HCT116 (cell line): ENCODE measurements at regions of chr10 and their contacts with region 1.

Region 1: GRCh38 chr10:122435212-122435827 is 19.1 kb upstream of the ARMS2 start:
- DNase-seq: peak; percentile 45
- ATAC-seq: peak; percentile 76
- H3K4me3 ChIP-seq: no peak overlapping the region
- H3K27ac ChIP-seq: no peak overlapping the region
- H3K4me1 ChIP-seq: no peaks in the 10 kb centered on the region
- H3K27me3 ChIP-seq: no peaks in the 10 kb centered on the region
- CTCF ChIP-seq: peak; percentile 44 to 96 (median 86)
- POLR2A ChIP-seq: no peak
- RAD21 ChIP-seq: peak; percentile 95

Region 2: GRCh38 chr10:121702351-121703320 is 732.7 kb before region 1 on chr10:
- CTCF ChIA-PET with region 1: no interaction called
- POLR2A ChIA-PET with region 1: no interaction called
- RAD21 ChIA-PET with region 1: no interaction called
- intact Hi-C with region 1: no loop called
- DNase-seq: no peak
- ATAC-seq: no peak
- H3K4me3 ChIP-seq: no peak overlapping the region
- H3K27ac ChIP-seq: no peak overlapping the region
- H3K4me1 ChIP-seq: peaks cover 0 to 5% of the 10 kb centered on the region in 2 experiments; a peak in 1 of 4 replicates
- H3K27me3 ChIP-seq: no peaks in the 10 kb centered on the region; the same call in 1 of the 2 replicates
- CTCF ChIP-seq: no peak
- POLR2A ChIP-seq: no peak
- RAD21 ChIP-seq: no peak

Region 3: GRCh38 chr10:122142641-122143237 is 292.6 kb before region 1 on chr10:
- CTCF ChIA-PET with region 1: no interaction called
- POLR2A ChIA-PET with region 1: no interaction called
- RAD21 ChIA-PET with region 1: no interaction called
- intact Hi-C with region 1: loop called (anchors 5 kb)
- DNase-seq: no peak
- ATAC-seq: peak; percentile 52
- H3K4me3 ChIP-seq: no peak overlapping the region
- H3K27ac ChIP-seq: no peak overlapping the region; the same call in 1 of the 2 replicates
- H3K4me1 ChIP-seq: peaks cover 31 to 45% of the 10 kb centered on the region in 2 experiments
- H3K27me3 ChIP-seq: no peaks in the 10 kb centered on the region
- CTCF ChIP-seq: peak; percentile 70 to 100 (median 99)
- POLR2A ChIP-seq: no peak
- RAD21 ChIP-seq: peak; percentile 92

Region 4: DNA sequence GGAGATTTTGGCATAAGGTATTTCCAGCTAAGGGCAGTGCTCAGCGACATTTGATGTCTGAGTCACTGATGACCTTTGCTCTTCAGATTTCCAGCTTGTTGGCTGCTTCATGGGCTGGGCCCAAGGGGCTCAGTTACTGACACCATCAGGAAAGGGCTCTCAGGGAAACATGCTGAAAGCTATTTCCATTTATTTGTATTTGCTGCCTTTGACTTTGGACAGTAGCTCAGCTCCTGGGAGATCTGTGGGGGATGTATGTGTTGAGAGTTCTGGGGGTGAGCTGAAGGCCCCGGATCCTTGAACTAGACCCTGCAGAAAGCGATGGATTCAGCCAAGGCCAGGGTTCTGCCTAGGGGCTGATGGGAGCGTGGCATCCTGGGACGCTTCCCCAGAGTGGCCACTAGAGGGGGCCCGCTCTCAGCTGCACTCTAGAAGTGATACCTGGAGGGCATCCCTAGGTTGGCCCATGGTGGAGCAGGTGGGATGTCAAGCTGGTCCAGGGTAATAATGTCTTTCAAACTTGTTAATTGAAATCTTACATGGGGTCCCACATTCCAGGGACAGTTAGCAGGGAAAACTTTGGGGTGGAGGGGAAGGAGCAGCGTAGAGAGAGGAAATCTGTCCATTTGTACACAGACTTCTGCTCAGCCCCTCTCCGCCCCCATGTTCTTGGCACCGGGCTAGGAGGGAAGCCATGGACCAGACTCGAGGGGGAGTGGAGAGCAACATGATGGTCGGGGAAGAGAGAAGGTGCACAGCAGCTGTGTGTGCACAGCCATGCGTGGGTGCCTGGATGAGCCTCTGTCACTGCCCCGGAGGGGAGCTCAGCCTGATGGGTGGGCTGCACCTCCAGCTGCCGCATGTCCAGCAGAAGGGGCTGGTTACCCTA is 167.2 kb before region 1 on chr10:
- CTCF ChIA-PET with region 1: interaction called, 11 read pairs
- POLR2A ChIA-PET with region 1: no interaction called
- RAD21 ChIA-PET with region 1: no interaction called
- intact Hi-C with region 1: no loop called
- DNase-seq: peak; percentile 36
- ATAC-seq: peak; percentile 99
- H3K4me3 ChIP-seq: no peak overlapping the region
- H3K27ac ChIP-seq: no peak overlapping the region
- H3K4me1 ChIP-seq: peaks cover 0 to 16% of the 10 kb centered on the region in 2 experiments; a peak in 2 of 4 replicates
- H3K27me3 ChIP-seq: no peaks in the 10 kb centered on the region
- CTCF ChIP-seq: peak; percentile 85 to 100 (median 100)
- POLR2A ChIP-seq: no peak
- RAD21 ChIP-seq: peak; percentile 80

Region 5: DNA sequence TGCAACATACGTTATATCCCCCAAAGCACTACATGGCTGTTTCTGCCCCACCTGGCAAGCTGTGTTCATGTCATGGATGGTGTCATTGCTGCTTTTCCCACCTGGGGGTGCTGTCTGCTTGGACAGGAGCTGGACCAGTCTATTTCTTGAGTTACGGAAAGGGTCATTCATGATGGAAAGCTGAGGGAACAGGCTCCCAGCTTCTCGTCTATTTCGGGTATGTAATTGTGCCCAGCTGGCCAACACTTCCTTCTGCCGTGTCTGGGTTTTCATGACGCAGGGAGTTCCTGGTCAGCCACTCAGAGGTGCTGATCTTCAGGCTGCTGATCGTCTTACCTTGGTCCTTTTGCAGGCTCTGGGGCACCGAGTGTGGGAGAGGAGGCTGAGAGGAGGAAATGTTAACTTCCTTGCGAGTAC is 155.6 kb before region 1 on chr10:
- CTCF ChIA-PET with region 1: interaction called, 52 read pairs
- POLR2A ChIA-PET with region 1: no interaction called
- RAD21 ChIA-PET with region 1: interaction called in 1 of 2 experiments, 4 read pairs
- intact Hi-C with region 1: loop called (anchors 1 kb)
- DNase-seq: peak; percentile 70
- ATAC-seq: peak; percentile 87
- H3K4me3 ChIP-seq: no peak overlapping the region
- H3K27ac ChIP-seq: no peak overlapping the region
- H3K4me1 ChIP-seq: peaks cover 3 to 15% of the 10 kb centered on the region in 2 experiments; a peak in 3 of 4 replicates
- H3K27me3 ChIP-seq: no peaks in the 10 kb centered on the region
- CTCF ChIP-seq: peak; percentile 88 to 98 (median 97); a peak in 5 of 6 replicates
- POLR2A ChIP-seq: no peak
- RAD21 ChIP-seq: peak; percentile 98

Region 6: DNA sequence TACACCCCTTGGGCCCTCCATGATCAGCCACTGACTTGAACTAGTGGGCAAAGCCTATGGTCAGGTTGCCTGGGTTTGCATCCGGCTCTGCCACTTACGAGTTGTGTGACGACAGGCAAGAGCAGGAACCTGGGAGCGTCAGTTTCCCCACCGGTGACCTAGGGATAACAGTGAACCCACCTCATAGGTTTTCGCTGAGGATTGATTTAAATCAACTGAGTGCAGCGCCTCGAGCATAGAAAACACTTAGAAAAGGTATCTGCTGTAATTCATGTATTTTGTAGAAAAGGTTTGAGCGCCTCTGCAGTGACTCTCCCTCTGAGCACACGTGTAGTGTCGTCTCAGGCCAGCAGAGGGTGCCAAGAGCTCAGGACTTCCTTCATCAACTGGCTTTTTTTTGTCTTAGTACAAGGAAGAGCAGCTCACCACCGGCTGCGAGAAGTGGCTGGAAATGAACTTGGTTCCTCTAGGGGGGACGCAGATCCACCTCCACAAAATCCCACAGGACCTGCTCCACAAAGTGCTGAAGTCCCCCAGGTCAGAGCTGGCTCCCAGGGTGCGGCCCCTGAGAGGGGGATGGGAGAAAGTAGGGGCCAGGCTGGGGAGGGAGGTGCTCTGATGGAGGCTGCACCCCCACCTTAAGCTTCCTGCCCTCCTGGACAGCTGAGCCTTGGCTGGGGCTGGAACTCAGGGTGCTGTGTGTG is 136.6 kb before region 1 on chr10:
- CTCF ChIA-PET with region 1: interaction called, 150 read pairs
- POLR2A ChIA-PET with region 1: interaction called, 4 read pairs
- RAD21 ChIA-PET with region 1: interaction called, 22 read pairs
- intact Hi-C with region 1: loop called (anchors 1 kb)
- DNase-seq: peak; percentile 73
- ATAC-seq: peak; percentile 95
- H3K4me3 ChIP-seq: peak overlapping the region; percentile 22 to 35
- H3K27ac ChIP-seq: no peak overlapping the region; the same call in 1 of the 2 replicates
- H3K4me1 ChIP-seq: peaks cover 0 to 18% of the 10 kb centered on the region in 2 experiments; a peak in 2 of 4 replicates
- H3K27me3 ChIP-seq: no peaks in the 10 kb centered on the region
- CTCF ChIP-seq: peak; percentile 94 to 99 (median 98)
- POLR2A ChIP-seq: no peak
- RAD21 ChIP-seq: peak; percentile 100

Region 7: GRCh38 chr10:122342293-122343134 is 92.8 kb before region 1 on chr10:
- CTCF ChIA-PET with region 1: interaction called, 14 read pairs
- POLR2A ChIA-PET with region 1: no interaction called
- RAD21 ChIA-PET with region 1: interaction called in 1 of 2 experiments, 4 read pairs
- intact Hi-C with region 1: loop called (anchors 1 kb)
- DNase-seq: peak; percentile 39
- ATAC-seq: peak; percentile 73
- H3K4me3 ChIP-seq: no peak overlapping the region
- H3K27ac ChIP-seq: no peak overlapping the region
- H3K4me1 ChIP-seq: peaks cover 7 to 17% of the 10 kb centered on the region in 2 experiments
- H3K27me3 ChIP-seq: no peaks in the 10 kb centered on the region
- CTCF ChIP-seq: peak; percentile 90 to 98 (median 90)
- POLR2A ChIP-seq: no peak
- RAD21 ChIP-seq: peak; percentile 89

Region 8: GRCh38 chr10:122446668-122447423 is 11.5 kb after region 1 on chr10:
- CTCF ChIA-PET with region 1: interaction called, 13 read pairs
- POLR2A ChIA-PET with region 1: interaction called, 3 read pairs
- RAD21 ChIA-PET with region 1: interaction called in 1 of 2 experiments, 3 read pairs
- intact Hi-C with region 1: no loop called
- DNase-seq: peak; percentile 36
- ATAC-seq: peak; percentile 99
- H3K4me3 ChIP-seq: no peak overlapping the region
- H3K27ac ChIP-seq: no peak overlapping the region
- H3K4me1 ChIP-seq: peaks cover 7 to 15% of the 10 kb centered on the region in 2 experiments; a peak in 3 of 4 replicates
- H3K27me3 ChIP-seq: no peaks in the 10 kb centered on the region
- CTCF ChIP-seq: no peak
- POLR2A ChIP-seq: no peak
- RAD21 ChIP-seq: no peak

Region 9: GRCh38 chr10:122637376-122637775 is 202.1 kb after region 1 on chr10:
- CTCF ChIA-PET with region 1: no interaction called
- POLR2A ChIA-PET with region 1: no interaction called
- RAD21 ChIA-PET with region 1: no interaction called
- intact Hi-C with region 1: no loop called
- DNase-seq: no peak
- ATAC-seq: no peak
- H3K4me3 ChIP-seq: no peak overlapping the region
- H3K27ac ChIP-seq: no peak overlapping the region
- H3K4me1 ChIP-seq: no peaks in the 10 kb centered on the region
- H3K27me3 ChIP-seq: peaks cover 32% of the 10 kb centered on the region
- CTCF ChIP-seq: no peak
- POLR2A ChIP-seq: no peak
- RAD21 ChIP-seq: no peak